PC-3 (cell line): ENCODE measurements at regions of chr17 and their contacts with region 1.

Region 1: DNA sequence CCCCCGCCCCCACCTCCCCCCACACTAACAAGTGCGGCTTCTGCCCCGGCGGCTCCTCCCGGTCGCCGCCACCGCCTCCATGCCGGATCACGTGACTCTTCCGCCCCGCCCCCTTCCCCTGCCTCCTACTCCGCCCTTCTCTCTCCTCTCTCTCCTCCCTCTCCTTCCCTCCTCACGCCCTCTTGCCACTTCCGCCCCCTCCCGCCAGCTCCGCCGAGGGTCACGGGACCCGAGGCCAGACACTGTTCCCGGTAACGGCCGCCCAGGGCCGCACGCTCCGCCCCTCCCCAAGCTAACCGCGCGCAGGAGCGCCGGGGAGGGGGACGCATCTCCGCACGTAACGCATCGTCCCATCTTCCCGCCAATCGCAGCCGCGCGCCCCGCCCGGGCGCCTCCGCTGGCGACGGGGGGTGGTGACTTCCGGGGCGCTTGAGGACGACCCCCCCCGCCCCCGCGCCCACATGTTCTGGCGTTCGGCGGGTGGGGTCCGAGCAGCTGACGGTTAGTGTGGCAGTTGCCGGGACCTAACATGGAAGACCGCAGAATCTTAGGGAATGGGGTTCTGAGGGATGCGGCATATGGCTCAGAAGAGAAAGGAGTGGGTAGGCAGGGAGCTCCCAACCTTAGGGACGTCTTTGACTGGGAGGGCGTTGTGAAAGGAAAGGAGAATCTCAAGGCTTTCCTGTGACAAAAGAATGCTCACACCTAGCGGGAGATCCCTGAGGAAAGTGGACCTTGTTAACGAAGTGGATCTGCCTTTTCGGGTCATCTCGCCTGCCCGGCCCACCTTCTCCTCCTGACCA is at the start of gene USP32:
- DNase-seq: peak; percentile 99
- ATAC-seq: peak; percentile 84
- H3K4me3 ChIP-seq: peak within 1 kb of the TSS; percentile 83
- H3K27ac ChIP-seq: peak within 1 kb of the TSS; percentile 86
- H3K4me1 ChIP-seq: peaks cover 23% of the 10 kb centered on the region
- H3K27me3 ChIP-seq: no peaks in the 10 kb centered on the region
- CTCF ChIP-seq: peak; percentile 33; the same call in 1 of the 2 replicates
- total RNA-seq, gene USP32: 34.0 and 34.1 TPM in 2 replicates

Region 2: GRCh38 chr17:59964482-59965328 is 427.5 kb before region 1 on chr17 and contains the start of gene RNFT1:
- CTCF ChIA-PET with region 1: no interaction called
- POLR2A ChIA-PET with region 1: interaction called, 11 read pairs
- intact Hi-C with region 1: no loop called
- DNase-seq: peak; percentile 93
- ATAC-seq: peak; percentile 81
- H3K4me3 ChIP-seq: peak within 1 kb of the TSS; percentile 92
- H3K27ac ChIP-seq: peak within 1 kb of the TSS; percentile 77
- H3K4me1 ChIP-seq: peaks cover 17% of the 10 kb centered on the region
- H3K27me3 ChIP-seq: no peaks in the 10 kb centered on the region
- CTCF ChIP-seq: no peak
- total RNA-seq, gene RNFT1: 13.5 and 18.1 TPM in 2 replicates

Region 3: DNA sequence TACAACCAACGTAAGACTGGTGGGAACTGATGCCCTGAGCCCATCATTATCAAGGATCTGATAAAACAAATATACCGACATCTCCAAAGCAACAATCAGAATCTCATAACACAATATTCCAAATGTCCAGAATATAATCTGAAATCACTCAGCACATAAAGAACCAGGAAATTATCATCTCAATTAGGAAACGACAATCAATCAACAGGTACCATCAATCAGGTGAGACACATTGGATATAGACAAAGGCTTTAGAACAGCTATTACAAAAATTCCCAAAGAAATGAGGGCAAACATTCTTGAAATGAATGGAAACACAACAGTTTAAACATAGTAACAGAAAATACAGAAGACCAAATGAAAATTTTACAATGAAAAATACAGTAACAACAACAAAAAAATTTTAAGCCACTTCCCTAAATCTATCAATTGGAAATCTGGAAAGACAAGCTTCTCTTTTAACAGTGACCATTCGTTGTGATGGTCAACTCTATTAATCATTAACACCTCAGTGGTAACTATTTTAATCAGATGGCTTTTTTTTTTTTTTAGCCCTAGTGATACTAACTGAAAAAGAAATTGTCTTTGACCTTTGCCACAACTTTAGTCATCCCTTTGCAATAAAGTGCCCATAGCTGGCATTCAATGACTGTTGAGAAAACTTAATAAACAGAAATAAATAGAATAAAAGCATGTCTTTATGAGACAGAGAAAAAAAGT is 70.7 kb before region 1 on chr17:
- CTCF ChIA-PET with region 1: no interaction called
- POLR2A ChIA-PET with region 1: no interaction called
- intact Hi-C with region 1: loop called (anchors 5 kb)
- DNase-seq: peak; percentile 16
- ATAC-seq: peak; percentile 37; the same call in 1 of the 2 replicates
- H3K4me3 ChIP-seq: no peak overlapping the region
- H3K27ac ChIP-seq: no peak overlapping the region
- H3K4me1 ChIP-seq: peaks cover 9% of the 10 kb centered on the region; the same call in 1 of the 2 replicates
- H3K27me3 ChIP-seq: no peaks in the 10 kb centered on the region
- CTCF ChIP-seq: no peak

Region 4: GRCh38 chr17:60354223-60354622 is 38.0 kb before region 1 on chr17:
- CTCF ChIA-PET with region 1: interaction called, 12 read pairs
- POLR2A ChIA-PET with region 1: interaction called, 3 read pairs
- intact Hi-C with region 1: loop called (anchors 2 kb)
- DNase-seq: peak; percentile 92
- ATAC-seq: peak; percentile 81
- H3K4me3 ChIP-seq: no peak overlapping the region
- H3K27ac ChIP-seq: peak overlapping the region; percentile 18; the same call in 1 of the 2 replicates
- H3K4me1 ChIP-seq: peaks cover 39% of the 10 kb centered on the region
- H3K27me3 ChIP-seq: no peaks in the 10 kb centered on the region
- CTCF ChIP-seq: no peak

Region 5: DNA sequence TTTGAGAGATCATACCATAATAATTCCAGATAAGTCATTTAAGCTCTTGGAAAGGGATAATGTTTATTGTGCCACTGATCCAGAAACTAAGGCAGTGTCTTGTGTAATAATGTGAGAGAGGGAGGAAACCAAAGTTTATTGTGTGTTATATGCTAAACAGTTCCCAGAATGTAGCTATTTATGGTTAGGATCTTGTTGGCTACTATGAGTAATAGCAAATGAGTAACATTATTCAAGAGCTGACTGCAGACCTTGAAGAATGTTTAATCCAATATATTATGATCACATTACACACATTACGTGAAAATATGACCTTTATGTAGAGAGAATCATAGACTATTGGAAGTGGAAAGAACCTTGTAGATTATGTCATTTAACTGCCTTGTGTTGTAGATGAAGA is 424.9 kb after region 1 on chr17:
- CTCF ChIA-PET with region 1: no interaction called
- POLR2A ChIA-PET with region 1: interaction called, 10 read pairs
- intact Hi-C with region 1: no loop called
- DNase-seq: peak; percentile 93
- ATAC-seq: peak; percentile 99
- H3K4me3 ChIP-seq: no peak overlapping the region
- H3K27ac ChIP-seq: peak overlapping the region; percentile 55
- H3K4me1 ChIP-seq: peaks cover 14% of the 10 kb centered on the region
- H3K27me3 ChIP-seq: no peaks in the 10 kb centered on the region
- CTCF ChIP-seq: no peak